ENCODE measurements at regions of chr1 and their contacts with region 1.

Region 1: DNA sequence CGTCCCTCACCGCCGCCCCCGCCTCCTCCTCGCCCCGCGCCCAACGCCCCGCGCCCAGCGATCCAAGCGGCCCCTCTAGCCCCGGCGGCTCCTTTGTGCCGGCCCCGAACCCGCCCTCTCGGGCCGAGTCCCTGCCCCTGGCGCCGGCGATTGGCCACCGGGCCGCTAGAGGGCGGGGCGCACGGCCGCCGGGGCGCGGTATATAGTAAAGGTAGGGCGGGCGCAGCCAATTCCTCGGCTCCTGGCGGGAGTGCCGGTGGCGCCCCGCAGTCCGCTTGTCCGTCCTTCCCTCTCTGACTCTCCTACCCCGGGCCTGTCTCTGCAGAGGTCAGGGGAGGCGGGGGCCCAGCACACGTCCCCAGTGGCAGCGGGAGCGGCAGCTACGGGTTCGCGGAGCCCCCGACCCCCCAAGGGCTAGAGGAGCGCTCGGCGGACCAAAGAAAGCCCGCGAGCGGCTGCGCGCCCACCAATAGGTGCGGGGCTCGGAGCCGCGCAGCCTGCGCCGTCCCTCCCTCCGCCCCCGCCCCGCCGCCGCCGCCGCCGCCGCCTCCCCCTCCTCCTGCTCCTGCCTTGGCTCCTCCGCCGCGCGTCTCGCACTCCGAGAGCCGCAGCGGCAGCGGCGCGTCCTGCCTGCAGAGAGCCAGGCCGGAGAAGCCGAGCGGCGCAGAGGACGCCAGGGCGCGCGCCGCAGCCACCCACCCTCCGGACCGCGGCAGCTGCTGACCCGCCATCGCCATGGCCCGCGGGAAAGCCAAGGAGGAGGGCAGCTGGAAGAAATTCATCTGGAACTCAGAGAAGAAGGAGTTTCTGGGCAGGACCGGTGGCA is at the start of gene ATP1B1:
- DNase-seq: peak; percentile 94
- H3K4me3 ChIP-seq: peak within 1 kb of the TSS; percentile 69 to 99 (median 98)
- H3K27ac ChIP-seq: peak within 1 kb of the TSS; percentile 96 to 97 (median 97)
- H3K4me1 ChIP-seq: peaks cover 0 to 51% (median 39%) of the 10 kb centered on the region in 4 donors
- H3K27me3 ChIP-seq: no peaks in the 10 kb centered on the region
- CTCF ChIP-seq: peak in 3 of 4 experiments; percentile 37 to 66 (median 57)
- EP300 ChIP-seq: peak in 2 of 4 donors; percentile 6 to 35
- POLR2A ChIP-seq: peak; percentile 89 to 96
- total RNA-seq, gene ATP1B1: 92.4 to 118 (median 109) TPM

Region 2: DNA sequence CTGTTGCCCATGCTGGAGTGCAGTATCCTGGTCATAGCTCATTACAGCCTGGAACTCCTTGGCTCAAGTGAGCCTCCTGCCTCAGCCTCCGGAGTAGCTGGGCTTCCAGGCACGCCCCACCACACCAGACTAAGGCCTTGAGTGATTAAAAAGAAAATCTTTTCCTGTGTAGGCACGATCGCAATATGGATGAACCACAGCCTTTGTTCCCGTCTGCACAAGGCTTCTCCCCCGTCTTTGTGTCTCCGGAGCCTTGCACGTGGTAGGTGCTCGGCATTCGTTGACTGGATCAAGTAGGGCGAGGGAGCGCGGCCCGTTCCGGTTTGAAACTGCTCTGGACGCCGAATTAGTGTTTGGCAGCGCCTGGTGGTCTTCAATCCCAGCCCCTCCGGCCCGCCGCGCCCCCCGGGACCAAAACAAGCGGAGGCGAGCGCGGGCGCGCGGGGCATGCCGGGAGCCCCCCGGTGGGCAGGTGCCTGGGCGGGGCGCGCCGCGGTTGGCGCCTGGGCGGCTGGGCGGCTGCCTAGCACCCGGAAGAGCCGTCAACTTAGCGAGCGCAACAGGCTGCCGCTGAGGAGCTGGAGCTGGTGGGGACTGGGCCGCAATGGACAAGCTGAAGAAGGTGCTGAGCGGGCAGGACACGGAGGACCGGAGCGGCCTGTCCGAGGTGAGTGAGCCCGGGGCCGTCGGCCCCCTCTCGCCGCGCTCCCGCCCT is 880.7 kb before region 1 on chr1 and contains the start of gene SFT2D2:
- intact Hi-C with region 1: loop called (anchors 10 kb)
- DNase-seq: peak; percentile 88
- H3K4me3 ChIP-seq: peak within 1 kb of the TSS; percentile 75 to 95 (median 82)
- H3K27ac ChIP-seq: peak within 1 kb of the TSS; percentile 85 to 93 (median 90)
- H3K4me1 ChIP-seq: peaks cover 0 to 44% (median 40%) of the 10 kb centered on the region in 4 donors
- H3K27me3 ChIP-seq: no peaks in the 10 kb centered on the region
- CTCF ChIP-seq: no peak
- EP300 ChIP-seq: no peak
- POLR2A ChIP-seq: peak; percentile 41 to 58
- total RNA-seq, gene SFT2D2: 36.7 to 43.2 (median 39.2) TPM

Region 3: DNA sequence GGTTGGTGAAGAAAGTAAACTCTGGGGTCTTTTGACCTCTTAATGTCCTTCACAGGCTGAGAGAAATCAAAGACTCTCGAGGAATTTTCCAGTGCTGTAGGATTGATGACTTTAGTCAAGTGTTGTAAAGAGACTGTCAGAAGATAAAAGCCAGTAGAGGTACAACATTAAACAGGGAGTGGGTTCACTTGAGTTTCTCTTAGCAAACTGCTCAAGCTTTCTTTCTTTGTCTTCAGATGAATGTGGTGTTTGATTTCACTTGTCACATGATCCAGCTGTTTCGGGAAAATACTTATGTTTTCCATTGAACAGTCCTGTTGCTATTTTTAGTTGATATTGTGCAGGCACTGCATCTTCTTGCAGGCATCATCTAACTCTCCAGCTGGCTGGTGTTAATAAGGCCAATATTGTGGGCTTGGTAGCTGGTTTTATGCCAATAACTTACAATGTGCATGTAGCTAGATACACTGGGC is 608.1 kb before region 1 on chr1:
- intact Hi-C with region 1: loop called (anchors 10 kb)
- DNase-seq: peak; percentile 72
- H3K4me3 ChIP-seq: no peak overlapping the region
- H3K27ac ChIP-seq: peak overlapping the region; percentile 55 to 78 (median 68)
- H3K4me1 ChIP-seq: peaks cover 2 to 79% (median 48%) of the 10 kb centered on the region in 4 donors
- H3K27me3 ChIP-seq: no peaks in the 10 kb centered on the region
- CTCF ChIP-seq: no peak
- EP300 ChIP-seq: peak; percentile 84 to 98 (median 94)
- POLR2A ChIP-seq: no peak

Region 4: GRCh38 chr1:168689726-168690602 is 416.3 kb before region 1 on chr1:
- intact Hi-C with region 1: loop called (anchors 5 kb)
- DNase-seq: no peak
- H3K4me3 ChIP-seq: no peak overlapping the region
- H3K27ac ChIP-seq: peak overlapping the region in 3 of 4 donors; percentile 66 to 70 (median 66)
- H3K4me1 ChIP-seq: peaks cover 0 to 64% (median 57%) of the 10 kb centered on the region in 4 donors
- H3K27me3 ChIP-seq: no peaks in the 10 kb centered on the region
- CTCF ChIP-seq: no peak
- EP300 ChIP-seq: no peak
- POLR2A ChIP-seq: no peak

Region 5: GRCh38 chr1:168920456-168921094 is 185.7 kb before region 1 on chr1:
- intact Hi-C with region 1: no loop called
- DNase-seq: peak; percentile 76
- H3K4me3 ChIP-seq: no peak overlapping the region
- H3K27ac ChIP-seq: peak overlapping the region; percentile 17 to 62 (median 39)
- H3K4me1 ChIP-seq: no peaks in the 10 kb centered on the region
- H3K27me3 ChIP-seq: no peaks in the 10 kb centered on the region
- CTCF ChIP-seq: no peak
- EP300 ChIP-seq: no peak
- POLR2A ChIP-seq: no peak

Region 6: GRCh38 chr1:169161496-169162194 is 55.3 kb after region 1 on chr1:
- intact Hi-C with region 1: loop called (anchors 1 kb)
- DNase-seq: peak; percentile 67
- H3K4me3 ChIP-seq: no peak overlapping the region
- H3K27ac ChIP-seq: peak overlapping the region; percentile 70 to 82 (median 75)
- H3K4me1 ChIP-seq: peaks cover 0 to 43% (median 23%) of the 10 kb centered on the region in 4 donors
- H3K27me3 ChIP-seq: no peaks in the 10 kb centered on the region
- CTCF ChIP-seq: no peak
- EP300 ChIP-seq: no peak
- POLR2A ChIP-seq: no peak

Region 7: GRCh38 chr1:169485544-169486278 is 379.4 kb after region 1 on chr1 and contains the start of gene SLC19A2:
- intact Hi-C with region 1: loop called (anchors 5 kb)
- DNase-seq: peak; percentile 100
- H3K4me3 ChIP-seq: peak within 1 kb of the TSS; percentile 78 to 92 (median 84)
- H3K27ac ChIP-seq: peak within 1 kb of the TSS; percentile 97 to 100 (median 99)
- H3K4me1 ChIP-seq: peaks cover 7 to 46% (median 38%) of the 10 kb centered on the region in 4 donors
- H3K27me3 ChIP-seq: no peaks in the 10 kb centered on the region
- CTCF ChIP-seq: peak in 1 of 4 experiments; percentile 17
- EP300 ChIP-seq: peak; percentile 96 to 100 (median 97)
- POLR2A ChIP-seq: peak; percentile 88 to 90
- total RNA-seq, gene SLC19A2: 21.0 to 31.3 (median 27.2) TPM